ENCODE measurements at regions of chr11 and their contacts with region 1.

Region 1: DNA sequence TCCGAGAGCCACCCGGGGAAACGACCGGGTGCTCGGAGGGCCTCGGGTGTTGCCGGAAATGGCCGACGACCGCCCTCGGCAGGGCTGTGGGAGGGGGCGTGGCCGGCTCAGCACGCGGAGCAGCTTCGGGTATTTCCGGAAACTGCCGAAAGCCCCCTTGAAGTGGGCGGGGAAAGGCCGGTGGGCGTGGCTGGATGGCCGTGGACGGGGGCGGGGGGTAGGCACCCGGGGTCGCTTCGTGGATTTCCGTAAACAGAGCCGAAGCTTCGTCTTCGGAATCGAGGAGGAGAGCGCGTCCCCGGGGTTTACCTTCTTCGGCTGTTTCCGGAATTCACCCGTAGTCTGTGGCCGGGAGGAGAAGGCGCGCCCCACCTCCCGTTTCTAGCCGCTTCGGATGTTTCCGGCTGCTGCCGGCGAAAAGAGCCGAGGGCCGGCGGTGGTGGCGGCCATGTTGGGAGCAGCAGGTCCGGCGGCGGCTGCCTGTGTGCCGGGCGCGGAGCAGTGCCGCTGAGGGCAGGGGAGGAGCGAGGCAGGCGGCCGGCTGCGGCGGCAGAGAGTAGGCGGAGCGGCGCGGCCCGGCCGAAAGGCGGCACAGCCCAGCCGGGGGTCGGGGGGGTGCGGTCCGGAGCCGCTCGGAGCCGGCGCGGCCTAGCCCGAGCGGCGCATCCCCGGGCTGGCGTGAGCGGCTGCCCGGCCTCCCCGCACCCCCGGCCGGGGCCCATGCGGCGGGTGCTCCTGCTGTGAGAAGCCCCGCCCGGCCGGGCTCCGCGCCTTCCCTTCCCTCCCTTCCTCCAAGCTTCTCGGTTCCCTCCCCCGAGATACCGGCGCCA is at the start of gene MARK2:
- DNase-seq: peak; percentile 82 to 98
- ATAC-seq: peak; percentile 80 to 90
- H3K4me3 ChIP-seq: peak within 1 kb of the TSS; percentile 75
- H3K27ac ChIP-seq: peak within 1 kb of the TSS; percentile 95 to 97
- H3K4me1 ChIP-seq: peaks cover 36% of the 10 kb centered on the region
- CTCF ChIP-seq: no peak
- EP300 ChIP-seq: no peak
- POLR2A ChIP-seq: peak; percentile 77
- RAD21 ChIP-seq: no peak
- polyA plus RNA-seq, gene MARK2: 24.7 and 28.4 TPM in 2 replicates

Region 2: GRCh38 chr11:63866211-63866610 is 27.3 kb after region 1 on chr11:
- CTCF ChIA-PET with region 1: interaction called, 17 read pairs
- POLR2A ChIA-PET with region 1: interaction called, 4 read pairs
- DNase-seq: no peak
- ATAC-seq: no peak
- H3K4me3 ChIP-seq: no peak overlapping the region
- H3K27ac ChIP-seq: 0 out of 6 replicates have a peak overlapping the region, but pooled peaks of 1 of the 2 experiments have one; percentile 13
- H3K4me1 ChIP-seq: peaks cover 57% of the 10 kb centered on the region
- CTCF ChIP-seq: no peak
- EP300 ChIP-seq: no peak
- POLR2A ChIP-seq: no peak
- RAD21 ChIP-seq: no peak

Region 3: GRCh38 chr11:63892228-63892627 is 53.3 kb after region 1 on chr11:
- CTCF ChIA-PET with region 1: interaction called, 27 read pairs
- POLR2A ChIA-PET with region 1: interaction called, 3 read pairs
- DNase-seq: no peak
- ATAC-seq: no peak; a peak in 1 of 6 replicates
- H3K4me3 ChIP-seq: no peak overlapping the region
- H3K27ac ChIP-seq: no peak overlapping the region
- H3K4me1 ChIP-seq: peaks cover 19% of the 10 kb centered on the region
- CTCF ChIP-seq: no peak
- EP300 ChIP-seq: no peak
- POLR2A ChIP-seq: no peak
- RAD21 ChIP-seq: no peak

Region 4: GRCh38 chr11:63916837-63917691 is 78.2 kb after region 1 on chr11 and contains the start of gene RCOR2:
- CTCF ChIA-PET with region 1: interaction called, 36 read pairs
- POLR2A ChIA-PET with region 1: interaction called, 4 read pairs
- DNase-seq: peak; percentile 87 to 91
- ATAC-seq: peak; percentile 47 to 51
- H3K4me3 ChIP-seq: peak within 1 kb of the TSS; percentile 62
- H3K27ac ChIP-seq: peak within 1 kb of the TSS; percentile 83 to 92
- H3K4me1 ChIP-seq: peaks cover 37% of the 10 kb centered on the region
- CTCF ChIP-seq: no peak
- EP300 ChIP-seq: no peak
- POLR2A ChIP-seq: peak; percentile 58
- RAD21 ChIP-seq: no peak
- polyA plus RNA-seq, gene RCOR2: 1.8 and 2.5 TPM in 2 replicates

Region 5: DNA sequence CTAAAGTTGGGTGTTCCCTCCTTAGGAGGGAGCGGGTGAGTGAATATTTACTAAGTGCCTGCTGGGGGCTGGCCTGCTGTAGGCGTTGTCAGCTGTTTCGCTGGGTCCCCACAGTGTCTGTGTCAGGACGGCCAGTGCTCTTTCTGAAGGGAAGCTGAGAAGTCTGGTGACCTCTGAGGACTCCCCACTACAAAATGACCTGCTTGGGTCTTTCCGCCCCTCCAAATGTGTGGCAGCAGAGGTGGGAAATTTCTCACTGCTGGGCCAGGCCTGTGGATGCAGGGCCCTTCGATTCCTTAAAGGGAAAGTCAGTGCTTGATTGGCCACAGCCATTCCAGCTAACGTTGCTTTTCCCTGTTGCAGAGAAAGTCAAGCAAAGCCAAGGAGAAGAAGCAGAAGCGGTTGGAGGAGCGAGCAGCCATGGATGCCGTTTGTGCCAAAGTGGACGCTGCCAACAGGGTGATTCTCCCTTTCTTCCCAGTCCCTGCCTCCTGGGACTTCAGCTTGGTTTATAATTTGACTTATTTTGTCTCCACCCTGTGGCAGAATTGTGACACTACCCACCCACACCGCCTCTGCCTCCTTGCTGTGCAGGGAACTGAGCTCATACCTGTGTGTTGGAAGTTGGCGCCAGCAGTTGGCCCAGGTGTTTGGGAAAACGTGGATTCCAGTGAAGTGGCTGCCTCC is 106.7 kb after region 1 on chr11:
- CTCF ChIA-PET with region 1: interaction called, 236 read pairs
- POLR2A ChIA-PET with region 1: interaction called, 9 read pairs
- DNase-seq: peak; percentile 75 to 82
- ATAC-seq: peak; percentile 98 to 99
- H3K4me3 ChIP-seq: no peak overlapping the region
- H3K27ac ChIP-seq: 0 out of 6 replicates have a peak overlapping the region, but pooled peaks of 1 of the 2 experiments have one; percentile 10
- H3K4me1 ChIP-seq: peaks cover 9% of the 10 kb centered on the region; the same call in 2 of the 3 replicates
- CTCF ChIP-seq: peak; percentile 71
- EP300 ChIP-seq: no peak
- POLR2A ChIP-seq: no peak
- RAD21 ChIP-seq: peak; percentile 79 to 81